ENCODE measurements at regions of chr17 and their contacts with region 1.

Region 1: GRCh38 chr17:73371285-73371684 is 59.5 kb upstream of the CDC42EP4 start:
- DNase-seq: no peak
- H3K4me3 Mint-ChIP-seq: no peak overlapping the region
- H3K27ac Mint-ChIP-seq: no peak overlapping the region
- H3K4me1 Mint-ChIP-seq: no peaks in the 10 kb centered on the region
- H3K27me3 Mint-ChIP-seq: peaks cover 9% of the 10 kb centered on the region

Region 2: DNA sequence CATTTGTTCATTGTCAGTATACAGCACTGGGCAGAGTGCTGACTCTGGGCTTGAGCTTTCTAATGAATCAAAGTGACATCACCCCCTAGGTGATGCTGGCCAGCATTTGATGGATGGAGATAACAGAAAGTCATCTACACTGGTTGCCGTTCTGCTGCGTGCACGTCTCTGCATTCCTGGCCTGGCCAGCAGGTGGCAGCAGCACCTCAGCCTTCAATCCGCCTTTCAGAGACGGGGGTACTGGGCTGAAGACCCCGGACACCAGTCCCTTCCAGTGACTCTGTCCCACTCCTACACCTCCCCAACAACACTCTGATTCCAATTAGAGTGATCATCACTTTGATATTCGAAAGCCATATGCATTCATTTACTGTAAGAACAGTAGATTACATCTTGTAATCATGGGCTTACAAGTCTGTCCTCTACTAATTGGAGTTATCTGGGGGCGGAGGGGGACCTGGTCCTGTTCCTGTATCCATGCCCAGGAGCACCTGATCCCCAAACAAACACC is 115.6 kb before region 1 on chr17:
- intact Hi-C with region 1: loop called (anchors 1 kb)
- DNase-seq: peak; percentile 36
- H3K4me3 Mint-ChIP-seq: no peak overlapping the region
- H3K27ac Mint-ChIP-seq: no peak overlapping the region
- H3K4me1 Mint-ChIP-seq: no peaks in the 10 kb centered on the region
- H3K27me3 Mint-ChIP-seq: no peaks in the 10 kb centered on the region

Measured in activated T-helper 2 cell treated with anti-CD3 and anti-CD28 coated beads, Interferon-gamma antibody, Interleukin-2, Interleukin-4, amounts not matched to agents 10 μg/mL and 5 μg/mL and 100 μg/mL, durations not matched to agents 14 hours and 24 hours and 36 hours (primary cell).